Activated CD4-positive, alpha-beta T cell treated with anti-CD3 and anti-CD28 coated beads, Interleukin-2, amount 10 ng/mL, durations not matched to agents 7 days and 5 days (primary cell): ENCODE measurements at regions of chr17 and their contacts with region 1.

Region 1: DNA sequence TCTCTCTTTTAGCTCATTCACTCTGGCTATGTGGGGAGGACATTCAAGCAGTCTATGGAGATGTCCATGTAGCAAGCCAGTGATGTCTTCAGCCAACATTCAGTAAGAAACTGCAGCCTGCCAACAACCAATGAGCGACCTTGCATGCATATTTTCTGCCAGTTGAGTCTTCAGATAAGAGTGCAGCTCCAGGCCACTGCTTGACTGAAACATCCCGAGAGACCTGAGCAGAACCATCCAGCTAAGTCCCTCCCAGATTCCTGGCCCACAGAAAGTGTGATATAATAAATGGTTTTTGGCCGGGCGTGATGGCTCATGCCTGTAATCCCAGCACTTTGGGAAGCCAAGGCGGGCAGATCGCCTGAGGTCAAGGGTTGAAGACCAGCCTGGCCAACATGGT is 10.5 kb upstream of the C17orf58 start:
- DNase-seq: no peak
- H3K4me3 Mint-ChIP-seq: no peak overlapping the region
- H3K27ac Mint-ChIP-seq: no peak overlapping the region
- H3K4me1 Mint-ChIP-seq: peaks cover 6% of the 10 kb centered on the region
- H3K27me3 Mint-ChIP-seq: no peaks in the 10 kb centered on the region

Region 2: DNA sequence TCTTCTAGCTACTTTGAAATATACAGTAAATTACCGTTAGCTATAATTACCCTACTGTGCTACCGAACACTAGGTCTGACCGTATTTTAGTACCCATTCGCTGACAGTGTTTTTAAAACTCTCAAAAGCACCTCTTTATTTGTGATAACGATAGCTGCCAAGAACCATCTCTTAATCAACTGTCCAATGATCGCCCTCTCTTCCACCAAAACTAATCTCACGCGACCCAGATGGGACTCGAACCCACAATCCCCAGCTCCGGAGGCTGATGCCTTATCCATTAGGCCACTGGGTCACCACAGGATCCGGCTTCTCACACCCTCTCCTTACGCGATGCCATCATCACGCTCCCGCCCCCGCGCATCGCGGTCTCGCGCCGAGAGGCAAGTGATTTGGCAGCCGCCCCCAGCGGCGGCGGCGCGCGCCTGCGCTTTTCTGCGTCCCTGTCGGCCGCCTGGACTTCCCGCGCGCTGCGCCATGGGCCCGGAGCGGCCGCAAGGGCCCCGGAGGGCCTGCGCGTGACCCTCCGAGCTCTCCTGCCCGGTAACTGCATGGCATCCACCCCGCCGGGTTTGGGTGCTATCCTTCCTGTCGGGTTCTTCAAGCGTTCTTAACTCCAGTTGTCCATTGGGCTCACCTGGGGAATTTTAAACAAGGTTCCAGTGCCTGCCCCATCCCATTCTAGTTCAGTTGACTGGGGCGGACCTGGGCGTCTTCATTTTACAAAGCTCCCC is 13.0 kb after region 1 on chr17:
- CTCF ChIA-PET with region 1: interaction called, 18 read pairs
- POLR2A ChIA-PET with region 1: no interaction called
- DNase-seq: peak; percentile 95
- H3K4me3 Mint-ChIP-seq: peak overlapping the region; percentile 81
- H3K27ac Mint-ChIP-seq: peak overlapping the region; percentile 94
- H3K4me1 Mint-ChIP-seq: peaks cover 14% of the 10 kb centered on the region
- H3K27me3 Mint-ChIP-seq: peaks cover 6% of the 10 kb centered on the region

Region 3: DNA sequence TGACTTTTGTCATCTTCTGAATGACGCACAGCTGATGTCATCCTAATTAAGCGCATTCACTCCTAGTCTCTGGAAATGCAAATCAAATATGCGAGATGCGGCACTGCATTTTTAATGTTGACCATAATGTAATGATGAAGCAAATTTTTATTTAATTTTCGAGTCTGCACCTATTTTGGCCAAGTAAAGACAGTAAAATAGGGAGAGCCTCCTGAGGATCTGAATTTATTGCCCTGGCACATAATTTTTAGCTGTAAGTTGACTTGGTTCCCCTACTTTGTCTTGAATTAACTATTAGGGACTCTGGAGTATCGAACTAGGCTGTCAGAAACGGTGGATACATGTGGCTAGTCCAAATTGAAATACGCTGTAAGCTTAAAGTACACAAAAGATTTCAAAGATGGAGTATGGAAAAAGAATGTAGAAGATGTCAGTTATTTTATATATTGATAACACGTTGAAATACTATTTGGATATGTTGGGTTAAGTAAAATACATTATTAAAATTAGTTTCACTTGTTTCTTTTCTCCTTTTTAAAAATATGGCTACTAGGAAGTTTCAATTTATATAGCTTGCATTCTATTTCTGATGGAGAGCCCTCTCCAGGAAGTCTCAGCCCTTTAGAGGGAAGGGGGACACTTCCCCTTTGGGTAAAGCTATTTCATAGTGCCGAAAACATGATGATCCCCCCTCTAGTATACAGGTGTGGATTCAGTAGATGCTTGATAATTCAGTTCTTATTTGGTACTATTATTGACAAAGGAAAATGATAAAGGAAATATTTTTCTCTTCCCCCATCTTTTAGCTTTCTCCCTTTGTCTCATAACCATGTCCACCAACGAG is 29.7 kb after region 1 on chr17:
- CTCF ChIA-PET with region 1: no interaction called
- POLR2A ChIA-PET with region 1: no interaction called
- DNase-seq: no peak
- H3K4me3 Mint-ChIP-seq: peak overlapping the region; percentile 96
- H3K27ac Mint-ChIP-seq: peak overlapping the region; percentile 97
- H3K4me1 Mint-ChIP-seq: peaks cover 32% of the 10 kb centered on the region
- H3K27me3 Mint-ChIP-seq: no peaks in the 10 kb centered on the region

Region 4: GRCh38 chr17:68057531-68057952 is 50.7 kb after region 1 on chr17:
- CTCF ChIA-PET with region 1: no interaction called
- POLR2A ChIA-PET with region 1: no interaction called
- DNase-seq: peak; percentile 59
- H3K4me3 Mint-ChIP-seq: no peak overlapping the region
- H3K27ac Mint-ChIP-seq: no peak overlapping the region
- H3K4me1 Mint-ChIP-seq: peaks cover 21% of the 10 kb centered on the region
- H3K27me3 Mint-ChIP-seq: peaks cover 4% of the 10 kb centered on the region